H1 (cell line): ENCODE measurements at regions of chr7 and their contacts with region 1.

Region 1: DNA sequence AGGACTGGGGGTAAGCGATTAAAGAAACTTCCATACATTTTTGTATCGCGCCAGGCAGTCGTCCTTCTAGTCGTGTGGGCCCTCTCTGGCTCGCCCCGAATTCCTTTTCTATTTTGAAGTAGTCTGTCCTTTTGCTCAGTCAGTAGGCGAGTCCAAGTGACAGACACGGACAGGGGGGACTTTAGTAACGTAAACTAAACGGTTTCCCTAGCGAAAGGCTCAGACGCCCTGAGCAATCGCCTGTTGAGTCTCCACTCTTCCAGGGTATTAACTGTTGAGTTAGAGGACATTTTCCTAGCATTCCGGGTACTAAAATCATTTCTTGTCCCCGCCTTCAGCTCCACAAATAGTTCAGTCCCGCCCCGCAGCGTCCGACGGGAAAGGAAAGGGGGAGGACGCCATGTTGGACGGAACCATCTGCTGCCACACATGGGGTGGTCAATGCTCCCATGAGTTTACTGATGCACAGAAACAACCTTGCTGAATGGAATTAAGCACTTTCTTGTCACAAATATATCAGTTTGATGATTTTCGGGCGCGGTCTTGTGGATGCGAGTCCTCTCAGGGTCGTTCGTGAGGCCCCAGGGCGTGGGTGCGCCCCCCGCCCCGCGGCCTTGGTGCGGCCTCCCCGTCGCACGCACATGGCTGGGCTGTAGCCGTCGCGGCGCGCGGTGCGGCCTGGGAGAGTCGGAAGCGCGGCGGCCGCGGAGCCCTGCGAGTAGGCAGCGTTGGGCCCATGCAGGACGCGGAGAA is at the start of gene EIF3B:
- DNase-seq: peak; percentile 54 to 87
- H3K4me3 ChIP-seq: peak within 1 kb of the TSS; percentile 93 to 100 (median 96)
- H3K27ac ChIP-seq: peak within 1 kb of the TSS; percentile 100
- H3K4me1 ChIP-seq: peaks cover 0 to 1% (median 0%) of the 10 kb centered on the region in 4 experiments; a peak in 4 of 7 replicates
- H3K27me3 ChIP-seq: no peaks in the 10 kb centered on the region
- CTCF ChIP-seq: no peak
- EP300 ChIP-seq: peak in 1 of 2 experiments; percentile 98; a peak in 2 of 3 replicates
- POLR2A ChIP-seq: peak in 1 of 2 experiments; percentile 80
- RAD21 ChIP-seq: no peak
- total RNA-seq, gene EIF3B: 306 and 316 TPM in 2 replicates

Region 2: DNA sequence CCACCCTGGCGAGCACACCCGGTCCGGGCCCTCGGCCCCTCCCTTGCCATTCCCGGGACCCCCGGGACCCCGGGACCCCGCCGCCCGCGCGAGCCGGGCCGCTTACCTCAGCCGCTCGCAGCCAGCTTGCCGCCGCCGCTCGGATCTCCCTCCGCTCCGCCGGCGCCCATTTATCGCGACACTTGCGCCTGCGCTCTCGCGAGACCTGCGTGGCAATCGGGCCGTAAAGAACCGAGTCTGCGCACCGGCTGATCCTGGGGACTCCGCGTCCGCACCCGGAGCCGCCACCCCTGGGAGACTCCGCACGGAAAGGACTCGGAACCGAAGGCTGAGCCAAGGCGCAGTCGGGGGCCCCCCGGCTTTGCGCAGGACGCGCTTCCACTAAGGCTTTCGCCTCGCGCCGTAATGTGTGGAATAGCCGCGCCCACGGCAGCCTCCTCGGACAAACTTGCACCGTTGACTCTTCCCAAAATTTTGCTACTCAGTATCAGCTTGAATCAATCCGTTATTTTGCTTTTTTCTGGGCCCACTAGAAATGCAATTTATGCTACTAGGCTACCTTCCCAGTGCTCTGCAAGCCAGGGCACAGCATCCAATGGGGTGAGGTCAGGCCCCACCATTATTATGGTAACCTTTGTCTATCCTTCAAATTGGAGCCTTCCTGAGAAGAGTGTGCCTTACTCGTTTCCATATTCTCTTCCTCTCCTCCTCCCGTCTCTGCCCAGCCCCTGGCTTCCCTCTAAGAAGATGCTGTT is 121.4 kb before region 1 on chr7 and contains the start of gene MAD1L1:
- CTCF ChIA-PET with region 1: no interaction called
- POLR2A ChIA-PET with region 1: interaction called, 11 read pairs
- DNase-seq: peak in 1 of 2 experiments; percentile 94
- H3K4me3 ChIP-seq: peak within 1 kb of the TSS; percentile 62 to 93 (median 82)
- H3K27ac ChIP-seq: peak within 1 kb of the TSS; percentile 31; the same call in 1 of the 2 replicates
- H3K4me1 ChIP-seq: peaks cover 0 to 2% (median 0%) of the 10 kb centered on the region in 4 experiments; a peak in 1 of 7 replicates
- H3K27me3 ChIP-seq: no peaks in the 10 kb centered on the region
- CTCF ChIP-seq: no peak
- EP300 ChIP-seq: no peak; a peak in 1 of 3 replicates
- POLR2A ChIP-seq: peak in 1 of 2 experiments; percentile 80; a peak in 2 of 3 replicates
- RAD21 ChIP-seq: no peak
- total RNA-seq, gene MAD1L1: 38.8 and 40.4 TPM in 2 replicates

Region 3: DNA sequence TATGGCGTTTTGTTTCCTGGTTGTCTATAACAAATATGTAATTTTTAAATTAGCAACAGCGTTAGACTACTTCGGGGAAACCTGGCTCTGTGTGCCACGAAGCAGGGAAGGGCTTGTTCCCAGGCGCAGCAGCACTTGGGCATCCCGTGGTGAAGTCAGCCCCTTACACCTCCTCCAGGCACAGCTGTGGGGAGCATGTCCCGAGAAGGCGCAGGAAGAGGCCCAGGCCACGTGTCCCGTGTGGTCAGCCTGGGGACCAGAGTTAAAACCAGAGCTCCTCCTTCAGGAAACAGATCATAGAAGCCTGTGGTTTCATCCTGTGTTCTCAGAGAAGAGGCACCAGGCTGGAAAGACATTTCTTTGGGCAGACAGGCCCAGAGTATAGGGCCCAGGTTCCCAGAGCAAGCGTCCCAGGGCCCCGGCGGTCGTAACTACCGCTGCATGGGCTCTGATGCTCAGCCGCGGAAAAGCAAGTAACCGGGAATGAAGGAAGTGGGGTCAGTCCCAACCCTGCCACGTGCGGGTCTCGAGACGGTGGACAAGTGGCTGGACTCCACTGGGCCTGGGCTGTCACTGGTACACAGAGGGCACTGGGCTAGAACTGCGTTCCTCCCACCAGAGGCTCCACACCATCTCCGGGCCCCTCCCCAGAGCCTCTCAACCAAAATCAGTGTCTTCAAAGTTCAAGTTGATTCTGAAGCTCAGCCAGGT is 105.2 kb before region 1 on chr7:
- CTCF ChIA-PET with region 1: interaction called, 3 read pairs
- POLR2A ChIA-PET with region 1: interaction called, 18 read pairs
- DNase-seq: no peak
- H3K4me3 ChIP-seq: no peak overlapping the region
- H3K27ac ChIP-seq: no peak overlapping the region
- H3K4me1 ChIP-seq: peaks cover 0 to 8% (median 2%) of the 10 kb centered on the region in 4 experiments; a peak in 4 of 7 replicates
- H3K27me3 ChIP-seq: no peaks in the 10 kb centered on the region
- CTCF ChIP-seq: no peak
- EP300 ChIP-seq: no peak
- POLR2A ChIP-seq: no peak
- RAD21 ChIP-seq: no peak

Region 4: DNA sequence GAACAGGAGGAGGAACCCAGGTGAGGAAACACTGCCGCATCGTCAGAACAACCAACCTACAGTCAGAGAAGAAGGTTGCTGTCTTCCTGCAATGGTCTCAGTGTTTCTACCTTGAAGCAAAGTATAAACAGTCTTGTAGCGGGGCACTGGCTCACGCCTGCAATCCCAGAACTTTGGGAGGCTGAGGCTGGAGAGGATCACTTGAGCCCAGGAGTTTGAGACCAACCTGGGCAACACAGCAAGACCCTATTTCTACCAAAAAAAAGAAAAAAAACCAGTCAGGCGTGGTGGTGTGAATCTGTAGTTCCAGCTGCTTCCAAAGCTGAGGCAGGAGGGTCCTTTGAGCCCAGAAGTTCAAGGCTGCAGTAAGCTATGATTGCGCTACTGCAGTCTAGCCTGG is 63.5 kb before region 1 on chr7:
- CTCF ChIA-PET with region 1: no interaction called
- POLR2A ChIA-PET with region 1: interaction called, 10 read pairs
- DNase-seq: no peak
- H3K4me3 ChIP-seq: no peak overlapping the region
- H3K27ac ChIP-seq: no peak overlapping the region
- H3K4me1 ChIP-seq: no peaks in the 10 kb centered on the region
- H3K27me3 ChIP-seq: no peaks in the 10 kb centered on the region; a peak in 1 of 7 replicates
- CTCF ChIP-seq: no peak
- EP300 ChIP-seq: no peak
- POLR2A ChIP-seq: no peak
- RAD21 ChIP-seq: no peak

Region 5: GRCh38 chr7:2314209-2314955 is 40.0 kb before region 1 on chr7 and contains the start of gene SNX8:
- CTCF ChIA-PET with region 1: interaction called, 3 read pairs
- POLR2A ChIA-PET with region 1: interaction called, 15 read pairs
- DNase-seq: peak; percentile 76 to 100
- H3K4me3 ChIP-seq: peak within 1 kb of the TSS; percentile 66 to 77 (median 74)
- H3K27ac ChIP-seq: peak within 1 kb of the TSS; percentile 35; the same call in 1 of the 2 replicates
- H3K4me1 ChIP-seq: peaks cover 4 to 10% (median 5%) of the 10 kb centered on the region in 4 experiments; a peak in 6 of 7 replicates
- H3K27me3 ChIP-seq: no peaks in the 10 kb centered on the region
- CTCF ChIP-seq: peak in 1 of 3 experiments; percentile 24; a peak in 1 of 4 replicates
- EP300 ChIP-seq: no peak
- POLR2A ChIP-seq: peak; percentile 66 to 78
- RAD21 ChIP-seq: peak in 1 of 2 experiments; percentile 12; a peak in 1 of 4 replicates
- total RNA-seq, gene SNX8: 46.2 and 49.5 TPM in 2 replicates

Region 6: DNA sequence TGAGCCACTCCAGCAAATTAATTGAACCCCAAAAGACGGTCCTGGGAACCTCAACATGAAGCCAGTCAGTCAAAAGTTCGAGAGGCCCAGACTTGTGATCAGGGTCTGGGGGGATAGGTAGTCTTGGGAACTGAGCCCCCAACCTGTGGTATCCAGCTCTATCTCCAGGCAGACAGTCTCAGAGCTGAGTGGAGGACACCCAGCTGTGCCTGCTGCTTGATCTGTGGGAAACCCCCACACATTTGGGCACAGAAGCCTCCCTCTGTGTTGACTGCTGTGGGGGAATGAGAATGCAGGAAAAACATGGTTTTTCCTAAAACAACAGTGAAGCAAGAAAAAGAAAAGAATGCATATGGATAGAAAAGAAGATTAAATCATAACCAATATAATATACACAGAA is 23.9 kb before region 1 on chr7:
- CTCF ChIA-PET with region 1: interaction called, 3 read pairs
- POLR2A ChIA-PET with region 1: interaction called, 18 read pairs
- DNase-seq: no peak
- H3K4me3 ChIP-seq: no peak overlapping the region
- H3K27ac ChIP-seq: no peak overlapping the region
- H3K4me1 ChIP-seq: no peaks in the 10 kb centered on the region
- H3K27me3 ChIP-seq: no peaks in the 10 kb centered on the region
- CTCF ChIP-seq: no peak
- EP300 ChIP-seq: no peak
- POLR2A ChIP-seq: no peak
- RAD21 ChIP-seq: no peak

Region 7: GRCh38 chr7:2384354-2385243 is 30.2 kb after region 1 on chr7:
- CTCF ChIA-PET with region 1: interaction called, 3 read pairs
- POLR2A ChIA-PET with region 1: interaction called, 14 read pairs
- DNase-seq: no peak
- H3K4me3 ChIP-seq: no peak overlapping the region
- H3K27ac ChIP-seq: no peak overlapping the region
- H3K4me1 ChIP-seq: peaks cover 0 to 5% (median 0%) of the 10 kb centered on the region in 4 experiments; a peak in 1 of 7 replicates
- H3K27me3 ChIP-seq: no peaks in the 10 kb centered on the region
- CTCF ChIP-seq: peak in 2 of 3 experiments; percentile 33; a peak in 2 of 4 replicates
- EP300 ChIP-seq: no peak
- POLR2A ChIP-seq: no peak
- RAD21 ChIP-seq: peak; percentile 46 to 64